Mammary epithelial cell (primary cell): ENCODE measurements at regions of chr7 and their contacts with region 1.

Region 1: GRCh38 chr7:7681179-7681935 is 37.0 kb downstream of the RPA3 start:
- DNase-seq: peak; percentile 66
- H3K4me3 ChIP-seq: no peak overlapping the region
- H3K27ac ChIP-seq: no peak overlapping the region
- H3K4me1 ChIP-seq: peaks cover 5% of the 10 kb centered on the region
- H3K27me3 ChIP-seq: no peaks in the 10 kb centered on the region
- CTCF ChIP-seq: peak; percentile 60 to 61

Region 2: DNA sequence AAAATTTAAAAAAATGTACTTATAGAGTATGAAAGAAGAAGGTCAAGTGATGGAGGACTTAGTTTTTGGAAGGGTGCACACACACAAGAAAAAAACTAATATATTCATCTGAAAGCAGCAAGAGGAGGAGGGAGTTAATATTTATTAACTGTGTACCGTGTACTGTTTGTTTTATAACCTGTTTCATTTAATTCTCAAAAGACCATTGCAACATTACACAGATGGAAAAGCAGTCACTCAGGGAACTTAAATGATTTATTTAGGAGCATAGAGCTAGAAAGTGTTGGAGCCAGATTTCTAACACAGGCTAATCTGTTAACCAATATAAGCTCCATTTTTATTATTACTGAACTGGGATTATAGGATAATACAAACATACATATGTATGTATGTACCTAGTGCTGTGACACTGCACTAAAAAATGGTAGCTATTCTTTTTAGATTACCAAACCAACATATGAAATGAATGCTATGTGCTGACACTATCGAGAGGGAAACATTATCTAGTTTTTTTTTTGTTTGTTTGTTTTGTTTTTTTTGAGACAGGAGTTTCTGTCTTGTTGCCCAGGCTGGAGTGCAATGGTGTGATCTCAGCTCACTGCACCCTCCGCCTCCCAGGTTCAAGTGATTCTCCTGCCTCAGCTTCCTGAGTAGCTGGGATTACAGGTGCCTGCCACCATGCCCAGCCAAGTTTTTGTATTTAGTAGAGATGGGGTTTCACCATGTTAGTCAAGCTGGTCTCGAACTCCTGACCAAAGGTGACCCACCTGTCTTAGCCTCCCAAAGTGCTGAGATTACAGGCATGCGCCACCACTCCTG is 324.1 kb after region 1 on chr7:
- CTCF ChIA-PET with region 1: no interaction called
- dilution Hi-C with region 1: no loop called
- in situ Hi-C with region 1: no loop called
- intact Hi-C with region 1: no loop called
- DNase-seq: no peak
- H3K4me3 ChIP-seq: no peak overlapping the region
- H3K27ac ChIP-seq: no peak overlapping the region
- H3K4me1 ChIP-seq: no peaks in the 10 kb centered on the region
- H3K27me3 ChIP-seq: no peaks in the 10 kb centered on the region
- CTCF ChIP-seq: no peak

Region 3: GRCh38 chr7:8035647-8036518 is 354.5 kb after region 1 on chr7:
- CTCF ChIA-PET with region 1: interaction called, 4 read pairs
- dilution Hi-C with region 1: no loop called
- in situ Hi-C with region 1: no loop called
- intact Hi-C with region 1: loop called (anchors 5 kb)
- DNase-seq: peak; percentile 37
- H3K4me3 ChIP-seq: no peak overlapping the region
- H3K27ac ChIP-seq: no peak overlapping the region
- H3K4me1 ChIP-seq: peaks cover 5% of the 10 kb centered on the region
- H3K27me3 ChIP-seq: no peaks in the 10 kb centered on the region
- CTCF ChIP-seq: peak; percentile 54 to 65

Region 4: GRCh38 chr7:8190119-8190895 is 508.9 kb after region 1 on chr7:
- CTCF ChIA-PET with region 1: interaction called, 3 read pairs
- dilution Hi-C with region 1: no loop called
- in situ Hi-C with region 1: no loop called
- intact Hi-C with region 1: loop called (anchors 1 kb)
- DNase-seq: peak; percentile 41
- H3K4me3 ChIP-seq: no peak overlapping the region
- H3K27ac ChIP-seq: no peak overlapping the region
- H3K4me1 ChIP-seq: no peaks in the 10 kb centered on the region
- H3K27me3 ChIP-seq: no peaks in the 10 kb centered on the region
- CTCF ChIP-seq: peak; percentile 67 to 75